WTC11 (cell line): ENCODE measurements at regions of chr1 and their contacts with region 1.

Region 1: DNA sequence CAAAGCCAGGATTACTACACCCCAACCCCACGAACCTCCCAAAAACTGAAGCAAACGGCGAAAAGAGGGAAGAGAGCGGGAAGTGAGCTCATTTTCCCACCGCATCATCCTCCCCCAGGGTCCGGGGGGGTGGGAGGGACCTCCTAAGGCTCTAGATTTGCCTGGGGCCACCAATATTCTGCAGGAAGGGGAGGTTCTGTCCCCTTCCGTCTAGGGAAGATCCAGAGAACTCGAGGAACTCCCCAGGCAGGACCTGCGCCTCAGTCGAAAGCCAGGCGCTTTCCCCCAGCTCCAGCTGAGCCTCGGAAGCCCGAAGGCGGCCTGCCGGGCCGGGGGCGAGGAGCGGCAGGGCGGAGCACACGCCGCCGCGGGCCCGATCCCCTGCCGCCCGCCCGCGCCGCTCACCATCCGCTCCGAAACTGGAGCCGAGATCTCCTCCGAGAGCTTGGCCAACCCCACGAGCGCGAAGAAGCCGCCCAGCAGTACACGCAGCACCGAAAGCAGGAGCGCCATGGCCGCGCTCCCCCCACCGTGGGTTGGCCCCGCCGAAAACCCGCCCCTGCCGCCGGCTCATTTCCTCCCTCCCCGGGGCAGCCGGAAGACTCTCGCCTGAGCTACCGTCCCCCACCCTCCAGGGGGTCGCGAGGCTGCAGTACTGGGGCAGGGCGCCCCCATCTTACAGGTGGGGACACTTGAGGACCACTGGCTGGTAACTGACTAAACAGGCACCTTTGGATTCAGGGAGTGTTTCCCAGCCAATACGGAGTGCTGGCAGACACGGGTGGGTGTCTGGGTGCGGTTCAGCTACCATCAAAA is at the start of gene TMEM35B:
- DNase-seq: peak; percentile 71
- ATAC-seq: peak; percentile 78
- H3K4me3 Mint-ChIP-seq: peak within 1 kb of the TSS; percentile 92
- H3K27ac Mint-ChIP-seq: peak within 1 kb of the TSS; percentile 79; the same call in 1 of the 2 replicates
- H3K4me1 Mint-ChIP-seq: peaks cover 11% of the 10 kb centered on the region
- H3K27me3 Mint-ChIP-seq: no peaks in the 10 kb centered on the region
- CTCF ChIP-seq: no peak
- total RNA-seq, gene TMEM35B: 8.7 to 11.0 TPM (median 10.6 TPM) in 3 replicates

Region 2: GRCh38 chr1:34929497-34929852 is 55.5 kb before region 1 on chr1 and contains the start of gene DLGAP3:
- CTCF ChIA-PET with region 1: interaction called, 16 read pairs
- POLR2A ChIA-PET with region 1: no interaction called
- DNase-seq: peak; percentile 44
- ATAC-seq: peak; percentile 26; the same call in 1 of the 2 replicates
- H3K4me3 Mint-ChIP-seq: peak within 1 kb of the TSS; percentile 83
- H3K27ac Mint-ChIP-seq: no peak within 1 kb of the TSS
- H3K4me1 Mint-ChIP-seq: peaks cover 21% of the 10 kb centered on the region
- H3K27me3 Mint-ChIP-seq: peaks cover 58% of the 10 kb centered on the region
- CTCF ChIP-seq: no peak
- total RNA-seq, gene DLGAP3: 8.2 to 11.3 TPM (median 9.7 TPM) in 3 replicates